Activated CD8-positive, alpha-beta T cell treated with anti-CD3 and anti-CD28 coated beads, Interleukin-2, amount 10 ng/mL, durations not matched to agents 7 days and 5 days (primary cell): ENCODE measurements at regions of chr10 and their contacts with region 1.

Region 1: DNA sequence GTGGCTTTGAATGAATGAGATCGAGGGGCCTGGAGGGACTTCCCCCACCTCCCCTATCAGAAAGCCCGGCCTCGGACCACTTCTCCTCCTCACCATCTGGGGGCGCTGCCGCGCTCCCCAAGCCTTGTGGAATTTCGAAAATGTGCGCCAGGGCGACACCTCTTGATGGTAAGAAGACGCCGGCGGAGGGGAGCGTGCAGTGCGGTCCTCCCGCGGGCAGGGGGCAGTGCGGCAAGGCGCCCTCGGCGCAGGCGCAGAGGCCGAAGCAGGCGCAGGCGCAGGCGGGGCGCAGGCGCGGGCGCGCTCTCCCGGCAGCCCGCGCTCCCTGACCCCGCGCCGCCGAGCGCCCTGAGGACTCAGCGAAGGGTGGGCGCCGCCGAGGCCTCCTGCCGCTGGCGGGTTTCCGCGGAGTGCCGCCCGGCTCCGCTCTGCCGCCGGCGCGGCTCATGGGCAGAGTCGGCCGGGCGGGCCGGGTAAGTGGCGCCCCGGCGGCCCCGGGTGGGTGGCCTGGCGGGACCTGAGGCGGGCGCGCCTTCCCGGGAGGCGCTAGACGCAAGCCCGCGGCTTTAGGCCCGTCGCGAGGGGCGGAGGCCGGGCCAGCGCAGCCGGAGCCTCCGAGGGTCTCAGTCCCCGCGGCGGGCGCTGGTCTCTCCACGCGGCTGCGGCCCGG is at the start of gene RBM17:
- DNase-seq: peak; percentile 98
- ATAC-seq: peak; percentile 85
- H3K4me3 Mint-ChIP-seq: peak within 1 kb of the TSS; percentile 98
- H3K27ac Mint-ChIP-seq: peak within 1 kb of the TSS; percentile 88
- H3K4me1 Mint-ChIP-seq: peaks cover 79% of the 10 kb centered on the region
- H3K27me3 Mint-ChIP-seq: no peaks in the 10 kb centered on the region
- total RNA-seq, gene RBM17: 213 to 217 TPM

Region 2: GRCh38 chr10:5977471-5978229 is 111.2 kb before region 1 on chr10 and contains the start of gene IL15RA:
- CTCF ChIA-PET with region 1: interaction called, 13 read pairs
- POLR2A ChIA-PET with region 1: interaction called, 11 read pairs
- DNase-seq: peak; percentile 93
- ATAC-seq: peak; percentile 87
- H3K4me3 Mint-ChIP-seq: peak within 1 kb of the TSS; percentile 97
- H3K27ac Mint-ChIP-seq: peak within 1 kb of the TSS; percentile 98
- H3K4me1 Mint-ChIP-seq: peaks cover 26% of the 10 kb centered on the region
- H3K27me3 Mint-ChIP-seq: peaks cover 5% of the 10 kb centered on the region
- total RNA-seq, gene IL15RA: 17.2 to 18.1 TPM

Region 3: DNA sequence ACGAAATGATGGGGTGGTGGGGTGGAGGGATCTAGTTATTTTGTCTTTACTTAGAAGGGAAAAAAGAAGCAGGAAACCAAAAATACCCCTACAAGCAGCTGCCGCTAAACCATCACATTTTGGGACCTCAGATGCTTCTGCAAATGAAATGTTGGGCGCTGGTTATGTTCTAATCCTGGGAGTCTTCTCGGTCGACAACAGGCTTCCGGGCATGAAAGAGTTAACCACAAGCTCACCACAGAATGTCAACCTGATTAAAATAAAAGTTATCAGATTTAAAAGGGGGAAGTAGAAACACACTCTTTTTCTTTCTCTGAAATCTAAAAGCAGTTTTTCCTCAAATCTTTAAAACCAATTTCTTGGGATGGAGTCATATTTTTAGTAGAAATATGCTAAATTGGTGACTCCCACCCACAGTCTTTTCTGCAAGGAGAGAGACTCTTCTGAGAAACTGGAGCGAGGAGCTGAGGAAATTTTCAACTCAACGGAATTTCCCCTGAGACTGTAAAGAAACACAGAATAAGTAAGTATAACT is 43.5 kb before region 1 on chr10:
- CTCF ChIA-PET with region 1: interaction called, 81 read pairs
- POLR2A ChIA-PET with region 1: interaction called, 23 read pairs
- DNase-seq: peak; percentile 70
- ATAC-seq: peak; percentile 29
- H3K4me3 Mint-ChIP-seq: peak overlapping the region; percentile 54
- H3K27ac Mint-ChIP-seq: peak overlapping the region; percentile 84
- H3K4me1 Mint-ChIP-seq: peaks cover 91% of the 10 kb centered on the region
- H3K27me3 Mint-ChIP-seq: no peaks in the 10 kb centered on the region

Region 4: GRCh38 chr10:6062101-6062771 is 26.6 kb before region 1 on chr10 and contains the start of gene IL2RA:
- CTCF ChIA-PET with region 1: interaction called, 370 read pairs
- POLR2A ChIA-PET with region 1: interaction called, 158 read pairs
- DNase-seq: peak; percentile 73
- ATAC-seq: peak; percentile 74
- H3K4me3 Mint-ChIP-seq: peak within 1 kb of the TSS; percentile 91
- H3K27ac Mint-ChIP-seq: peak within 1 kb of the TSS; percentile 92
- H3K4me1 Mint-ChIP-seq: peaks cover 72% of the 10 kb centered on the region
- H3K27me3 Mint-ChIP-seq: no peaks in the 10 kb centered on the region
- total RNA-seq, gene IL2RA: 174 to 177 TPM

Region 5: GRCh38 chr10:6108603-6109443 is 20.0 kb after region 1 on chr10:
- CTCF ChIA-PET with region 1: interaction called, 13 read pairs
- POLR2A ChIA-PET with region 1: no interaction called
- DNase-seq: peak; percentile 52
- ATAC-seq: peak; percentile 54
- H3K4me3 Mint-ChIP-seq: no peak overlapping the region
- H3K27ac Mint-ChIP-seq: peak overlapping the region; percentile 81
- H3K4me1 Mint-ChIP-seq: peaks cover 38% of the 10 kb centered on the region
- H3K27me3 Mint-ChIP-seq: no peaks in the 10 kb centered on the region

Region 6: DNA sequence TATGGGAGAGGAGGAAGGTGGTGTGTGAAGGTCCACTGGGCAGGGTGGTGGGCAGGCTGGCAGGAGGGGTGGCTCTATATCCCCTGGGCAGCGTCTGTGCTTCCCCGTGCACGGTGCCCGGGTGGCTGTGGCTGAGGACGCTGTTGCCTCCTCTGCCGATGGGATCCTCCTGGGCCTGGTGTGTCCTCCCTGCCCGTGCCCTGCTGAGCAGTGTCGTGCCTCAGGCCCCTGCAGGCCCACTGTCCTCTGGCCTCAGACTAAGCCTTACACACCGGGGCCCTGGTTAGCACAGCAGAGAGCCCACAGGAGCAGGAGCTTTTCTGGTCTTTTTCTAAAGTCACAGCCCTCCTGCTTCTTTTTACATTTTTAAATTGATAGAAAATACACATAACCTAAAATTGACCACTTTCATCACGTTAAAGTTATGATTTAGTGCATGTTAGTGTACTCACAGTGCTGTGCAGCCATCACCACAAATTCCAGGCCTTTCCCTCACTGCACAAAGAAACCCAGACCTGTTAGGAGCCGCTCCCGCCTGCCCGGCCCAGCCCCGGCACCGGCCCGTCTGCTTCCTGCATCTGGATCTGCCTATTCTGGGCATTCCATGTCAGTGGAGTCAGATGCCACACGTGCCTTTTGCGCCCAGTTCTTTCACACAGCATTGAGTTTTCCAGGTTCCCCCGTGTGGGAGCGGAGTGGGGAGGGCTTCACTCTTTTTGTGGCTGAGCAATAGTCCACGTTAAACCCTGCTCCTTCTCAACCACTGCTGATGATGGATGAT is 133.3 kb after region 1 on chr10:
- CTCF ChIA-PET with region 1: no interaction called
- POLR2A ChIA-PET with region 1: no interaction called
- DNase-seq: no peak
- ATAC-seq: no peak
- H3K4me3 Mint-ChIP-seq: no peak overlapping the region
- H3K27ac Mint-ChIP-seq: no peak overlapping the region
- H3K4me1 Mint-ChIP-seq: peaks cover 10% of the 10 kb centered on the region
- H3K27me3 Mint-ChIP-seq: no peaks in the 10 kb centered on the region